Dendritic cell treated with granulocyte-macrophage colony-stimulating factor and Interleukin-4, amounts not matched to agents 40 ng/mL and 50 ng/mL, for 4 days (primary cell): ENCODE measurements at regions of chr2 and their contacts with region 1.

Region 1: GRCh38 chr2:54763636-54764291 is 40.3 kb downstream of the EML6 start:
- H3K4me3 Mint-ChIP-seq: no peak overlapping the region
- H3K27ac Mint-ChIP-seq: no peak overlapping the region
- H3K4me1 Mint-ChIP-seq: no peaks in the 10 kb centered on the region
- H3K27me3 Mint-ChIP-seq: no peaks in the 10 kb centered on the region

Region 2: GRCh38 chr2:54545702-54546450 is 217.9 kb before region 1 on chr2:
- intact Hi-C with region 1: no loop called
- H3K4me3 Mint-ChIP-seq: no peak overlapping the region
- H3K27ac Mint-ChIP-seq: no peak overlapping the region
- H3K4me1 Mint-ChIP-seq: no peaks in the 10 kb centered on the region
- H3K27me3 Mint-ChIP-seq: peaks cover 2% of the 10 kb centered on the region

Region 3: GRCh38 chr2:54599914-54600313 is 163.8 kb before region 1 on chr2:
- intact Hi-C with region 1: no loop called
- H3K4me3 Mint-ChIP-seq: no peak overlapping the region
- H3K27ac Mint-ChIP-seq: no peak overlapping the region
- H3K4me1 Mint-ChIP-seq: peaks cover 43% of the 10 kb centered on the region
- H3K27me3 Mint-ChIP-seq: no peaks in the 10 kb centered on the region

Region 4: DNA sequence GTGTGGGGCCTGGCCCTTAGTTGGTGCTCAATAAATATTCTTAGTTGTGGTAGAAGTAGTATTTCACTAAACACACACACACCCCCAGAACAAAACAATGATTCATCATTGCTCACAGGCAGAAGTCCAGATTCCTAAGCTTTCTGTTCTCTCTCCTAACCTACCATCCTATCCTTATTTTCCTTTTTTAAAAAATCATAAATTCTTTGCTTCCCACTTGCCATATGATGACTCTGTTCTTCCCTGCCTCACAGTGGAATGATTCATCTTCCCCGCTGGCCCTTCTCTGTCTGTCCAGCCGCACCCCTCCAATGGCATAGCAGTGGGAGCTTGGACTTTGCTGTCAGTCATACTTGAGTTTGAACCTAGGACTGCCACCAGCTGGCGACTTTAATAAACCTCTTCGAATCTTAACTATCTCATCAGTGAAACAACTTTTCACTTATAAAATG is 35.1 kb before region 1 on chr2:
- intact Hi-C with region 1: no loop called
- H3K4me3 Mint-ChIP-seq: no peak overlapping the region
- H3K27ac Mint-ChIP-seq: no peak overlapping the region
- H3K4me1 Mint-ChIP-seq: peaks cover 14% of the 10 kb centered on the region
- H3K27me3 Mint-ChIP-seq: peaks cover 49% of the 10 kb centered on the region

Region 5: GRCh38 chr2:54845514-54845913 is 81.8 kb after region 1 on chr2:
- intact Hi-C with region 1: loop called (anchors 10 kb)
- H3K4me3 Mint-ChIP-seq: no peak overlapping the region
- H3K27ac Mint-ChIP-seq: no peak overlapping the region
- H3K4me1 Mint-ChIP-seq: peaks cover 6% of the 10 kb centered on the region
- H3K27me3 Mint-ChIP-seq: no peaks in the 10 kb centered on the region

Region 6: DNA sequence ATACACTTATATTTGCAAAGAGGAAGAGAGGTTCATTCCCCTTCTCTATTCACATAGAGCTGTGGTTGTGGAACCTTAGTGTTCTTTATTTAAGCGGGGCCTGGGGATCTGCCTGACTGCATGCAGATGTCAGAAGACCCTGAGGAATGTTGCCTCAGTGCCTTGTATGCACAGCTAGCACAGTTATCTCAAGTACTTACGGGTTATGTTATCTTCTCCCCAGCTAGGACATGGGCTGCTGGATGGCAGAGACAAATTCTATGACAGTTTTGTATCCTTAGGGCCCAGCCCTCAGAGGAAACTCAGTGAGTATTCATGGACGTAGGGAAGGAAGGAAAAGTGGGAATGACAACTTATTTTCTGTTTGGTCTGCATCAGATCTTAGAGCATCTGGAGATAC is 324.2 kb after region 1 on chr2:
- intact Hi-C with region 1: no loop called
- H3K4me3 Mint-ChIP-seq: no peak overlapping the region
- H3K27ac Mint-ChIP-seq: no peak overlapping the region
- H3K4me1 Mint-ChIP-seq: peaks cover 31% of the 10 kb centered on the region
- H3K27me3 Mint-ChIP-seq: no peaks in the 10 kb centered on the region